ENCODE measurements at regions of chr11 and their contacts with region 1.

Region 1: DNA sequence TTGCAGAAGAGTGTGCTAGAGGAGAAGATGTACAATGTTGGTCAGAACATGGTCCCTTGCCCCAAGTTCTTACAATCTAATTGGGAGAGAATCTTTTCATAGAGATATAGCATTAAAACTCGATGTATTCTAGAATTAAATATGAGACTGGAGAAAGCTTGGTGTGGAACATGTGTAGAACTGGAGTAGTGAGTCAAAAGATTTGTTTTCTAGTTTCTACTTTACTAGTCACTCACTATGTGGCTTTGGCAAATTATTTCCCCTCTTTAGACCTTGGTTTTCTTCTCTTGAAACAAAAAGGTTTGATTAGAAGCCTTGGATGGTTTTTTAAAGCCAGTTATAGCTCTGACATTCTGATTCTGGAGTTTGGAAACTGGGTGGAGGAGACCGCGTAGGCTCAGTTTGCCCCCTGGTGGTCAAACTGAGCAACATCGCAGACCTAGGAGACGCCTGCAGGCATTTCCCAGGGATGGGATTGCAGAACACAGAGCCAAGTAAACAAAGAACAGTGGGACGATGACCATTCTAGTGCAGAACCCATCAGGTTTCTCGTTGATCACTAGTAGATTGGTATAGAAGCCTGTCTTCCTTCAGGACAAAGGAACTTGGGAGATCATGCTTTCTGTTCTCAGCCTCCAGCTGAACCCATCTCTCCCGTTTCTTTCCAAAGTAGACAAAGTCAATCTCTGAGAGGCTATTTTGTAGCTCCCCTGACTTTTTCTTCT is 8.5 kb upstream of the CHRDL2 start:
- DNase-seq: peak in 2 of 5 donors; percentile 47 to 58
- ATAC-seq: peak; percentile 79 to 91 (median 88)
- H3K4me3 ChIP-seq: no peak overlapping the region
- H3K27ac ChIP-seq: no peak overlapping the region
- H3K4me1 ChIP-seq: peaks cover 0 to 6% (median 0%) of the 10 kb centered on the region in 12 donors
- H3K27me3 ChIP-seq: peaks cover 0 to 7% (median 0%) of the 10 kb centered on the region in 9 donors
- CTCF ChIP-seq: peak; percentile 81 to 93 (median 90)
- POLR2A ChIP-seq: no peak

Region 2: GRCh38 chr11:74611369-74611861 is 128.3 kb before region 1 on chr11:
- intact Hi-C with region 1: loop called in 1 of 10 experiments (anchors 1 kb)
- DNase-seq: no peak
- ATAC-seq: peak in 2 of 4 donors; percentile 18 to 60
- H3K4me3 ChIP-seq: no peak overlapping the region
- H3K27ac ChIP-seq: peak overlapping the region in 2 of 12 donors; percentile 73 to 83
- H3K4me1 ChIP-seq: peaks cover 0 to 19% (median 0%) of the 10 kb centered on the region in 12 donors
- H3K27me3 ChIP-seq: no peaks in the 10 kb centered on the region
- CTCF ChIP-seq: peak in 11 of 12 donors; percentile 25 to 50 (median 38)
- POLR2A ChIP-seq: no peak

Region 3: GRCh38 chr11:74620531-74620930 is 119.2 kb before region 1 on chr11:
- intact Hi-C with region 1: loop called in 1 of 10 experiments (anchors 5 kb)
- DNase-seq: no peak
- ATAC-seq: no peak
- H3K4me3 ChIP-seq: no peak overlapping the region
- H3K27ac ChIP-seq: no peak overlapping the region
- H3K4me1 ChIP-seq: no peaks in the 10 kb centered on the region
- H3K27me3 ChIP-seq: no peaks in the 10 kb centered on the region
- CTCF ChIP-seq: no peak
- POLR2A ChIP-seq: no peak

Region 4: GRCh38 chr11:74702383-74703007 is 37.2 kb before region 1 on chr11:
- intact Hi-C with region 1: loop called in 1 of 10 experiments (anchors 5 kb)
- DNase-seq: peak; percentile 54 to 78 (median 59)
- ATAC-seq: peak in 3 of 4 donors; percentile 55 to 77 (median 68)
- H3K4me3 ChIP-seq: no peak overlapping the region
- H3K27ac ChIP-seq: peak overlapping the region in 1 of 12 donors; percentile 38
- H3K4me1 ChIP-seq: peaks cover 0 to 7% (median 2%) of the 10 kb centered on the region in 12 donors
- H3K27me3 ChIP-seq: no peaks in the 10 kb centered on the region
- CTCF ChIP-seq: peak; percentile 75 to 96 (median 88)
- POLR2A ChIP-seq: peak in 1 of 2 donors; percentile 8